ENCODE measurements at regions of chr5 and their contacts with region 1.

Region 1: DNA sequence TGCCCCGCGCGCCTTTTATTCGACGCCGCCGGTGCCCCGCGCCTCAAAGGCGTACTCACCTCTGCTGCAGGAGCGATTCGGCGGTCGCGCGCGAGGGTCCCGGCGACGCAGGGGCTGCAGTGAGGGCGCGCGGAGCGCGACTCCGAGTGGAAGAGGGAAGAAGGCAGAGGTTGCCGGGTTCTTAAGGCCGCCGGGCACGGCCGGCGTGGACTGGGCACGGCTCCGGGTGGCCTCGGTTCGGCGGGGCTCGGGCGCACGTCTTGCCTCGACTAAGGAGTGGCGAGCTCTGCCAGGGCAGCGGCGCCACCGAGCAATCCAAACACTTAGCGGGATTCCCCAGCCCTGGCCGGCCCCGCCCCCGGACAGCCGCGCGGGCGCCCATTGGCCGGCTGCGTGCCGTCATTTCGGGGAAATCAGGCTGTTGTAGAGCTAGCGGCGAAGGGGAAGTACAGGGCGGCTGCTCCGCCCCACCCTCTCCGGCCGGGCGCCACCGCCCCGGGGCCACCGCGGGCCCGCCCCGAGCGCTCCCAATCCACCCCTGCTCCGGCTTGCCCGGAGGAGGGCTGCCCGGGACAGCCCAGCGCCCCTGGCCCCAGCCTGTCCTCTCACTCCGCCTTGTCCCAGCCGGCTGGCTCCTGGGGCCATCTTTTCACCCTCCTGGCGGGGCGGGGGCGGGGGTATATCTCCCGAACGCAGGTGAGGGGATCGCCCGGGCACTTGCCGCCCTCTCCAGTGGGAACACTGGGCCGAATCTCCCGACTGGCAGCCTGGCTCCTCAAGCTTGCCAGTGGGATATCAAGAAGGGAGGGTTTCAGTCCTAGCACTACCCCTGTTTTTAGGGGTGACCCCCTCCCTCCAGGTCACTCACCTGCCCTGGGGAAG is at the start of gene IRF1:
- DNase-seq: peak; percentile 99
- H3K4me3 Mint-ChIP-seq: peak within 1 kb of the TSS; percentile 93
- H3K27ac Mint-ChIP-seq: peak within 1 kb of the TSS; percentile 99
- H3K4me1 Mint-ChIP-seq: peaks cover 66% of the 10 kb centered on the region
- H3K27me3 Mint-ChIP-seq: no peaks in the 10 kb centered on the region
- total RNA-seq, gene IRF1: 104 to 106 TPM

Region 2: GRCh38 chr5:131548176-131548575 is 942.6 kb before region 1 on chr5:
- CTCF ChIA-PET with region 1: no interaction called
- POLR2A ChIA-PET with region 1: no interaction called
- intact Hi-C with region 1: loop called (anchors 10 kb)
- DNase-seq: no peak
- H3K4me3 Mint-ChIP-seq: peak overlapping the region; percentile 86
- H3K27ac Mint-ChIP-seq: peak overlapping the region; percentile 92
- H3K4me1 Mint-ChIP-seq: peaks cover 70% of the 10 kb centered on the region
- H3K27me3 Mint-ChIP-seq: no peaks in the 10 kb centered on the region

Region 3: GRCh38 chr5:132410451-132411381 is 80.0 kb before region 1 on chr5:
- CTCF ChIA-PET with region 1: interaction called, 26 read pairs
- POLR2A ChIA-PET with region 1: interaction called, 101 read pairs
- intact Hi-C with region 1: no loop called
- DNase-seq: peak; percentile 90
- H3K4me3 Mint-ChIP-seq: peak overlapping the region; percentile 93
- H3K27ac Mint-ChIP-seq: peak overlapping the region; percentile 96
- H3K4me1 Mint-ChIP-seq: peaks cover 65% of the 10 kb centered on the region
- H3K27me3 Mint-ChIP-seq: no peaks in the 10 kb centered on the region

Region 4: DNA sequence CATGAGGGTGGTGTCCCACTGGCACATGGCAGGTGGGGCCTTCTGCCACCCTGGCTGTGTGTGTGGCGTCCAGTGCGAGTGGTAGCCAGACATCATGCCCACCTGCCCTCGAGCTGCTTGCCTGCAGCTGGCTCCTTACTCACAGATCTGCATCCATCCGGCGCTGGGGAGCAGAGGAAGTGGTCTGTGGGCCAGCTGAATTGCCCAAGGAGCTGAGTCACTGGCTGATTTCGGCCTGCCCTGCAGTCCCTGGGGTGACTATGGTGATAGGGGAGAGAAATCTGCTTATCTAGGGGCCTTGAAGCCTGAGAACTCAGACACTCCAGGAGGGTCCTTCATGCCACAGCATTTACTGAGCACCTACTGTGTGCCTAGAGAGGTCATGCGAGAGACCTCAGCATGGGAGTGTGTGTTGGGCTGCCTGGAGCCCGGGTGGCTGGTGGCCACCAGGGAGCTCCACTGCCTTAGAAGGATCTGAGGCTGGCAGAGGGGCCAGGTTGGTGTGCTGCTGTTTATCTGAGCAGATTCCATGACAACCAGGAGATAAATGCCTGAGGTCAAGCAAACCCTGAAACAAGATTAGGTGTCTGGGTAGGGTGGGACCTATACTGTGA is 64.1 kb before region 1 on chr5:
- CTCF ChIA-PET with region 1: interaction called, 40 read pairs
- POLR2A ChIA-PET with region 1: interaction called, 361 read pairs
- intact Hi-C with region 1: loop called (anchors 1 kb)
- DNase-seq: peak; percentile 91
- H3K4me3 Mint-ChIP-seq: peak overlapping the region; percentile 65
- H3K27ac Mint-ChIP-seq: peak overlapping the region; percentile 98
- H3K4me1 Mint-ChIP-seq: peaks cover 96% of the 10 kb centered on the region
- H3K27me3 Mint-ChIP-seq: no peaks in the 10 kb centered on the region

Region 5: DNA sequence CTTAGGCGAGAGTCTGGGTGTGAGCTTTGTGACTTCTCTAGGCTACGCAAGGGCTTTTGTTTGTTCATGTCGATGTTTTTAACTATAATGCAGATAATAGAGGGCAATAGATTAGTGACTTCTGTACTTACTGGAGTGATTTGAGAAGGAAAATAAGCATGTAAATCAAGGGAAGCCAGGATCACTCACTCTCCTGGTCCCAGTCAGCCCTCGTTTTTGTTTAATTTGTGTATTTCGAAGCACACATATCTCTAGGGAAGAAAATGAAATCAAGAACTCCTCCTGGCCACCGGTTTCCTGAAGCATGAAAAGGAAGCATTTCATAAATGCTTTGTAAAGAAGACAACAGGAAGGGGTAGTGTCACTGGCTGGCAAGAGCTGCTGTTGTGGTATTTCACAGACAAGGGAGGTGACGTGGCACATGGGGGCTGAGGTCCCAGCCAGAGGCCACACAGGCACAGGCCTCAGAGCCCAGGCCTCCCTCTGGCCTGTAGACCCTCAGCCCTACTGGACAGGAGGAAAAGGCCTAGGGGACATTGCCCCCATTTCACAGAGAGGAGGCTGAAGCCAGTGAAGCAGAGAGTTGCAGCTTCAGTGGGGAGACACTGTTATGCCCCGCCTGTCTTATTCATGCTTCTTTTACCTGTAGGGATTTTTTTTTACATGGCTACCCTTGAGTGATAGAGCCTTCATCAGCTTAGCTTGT is 34.3 kb before region 1 on chr5:
- CTCF ChIA-PET with region 1: interaction called, 5 read pairs
- POLR2A ChIA-PET with region 1: interaction called, 76 read pairs
- intact Hi-C with region 1: loop called (anchors 1 kb)
- DNase-seq: peak; percentile 76
- H3K4me3 Mint-ChIP-seq: peak overlapping the region; percentile 53
- H3K27ac Mint-ChIP-seq: peak overlapping the region; percentile 92
- H3K4me1 Mint-ChIP-seq: peaks cover 90% of the 10 kb centered on the region
- H3K27me3 Mint-ChIP-seq: no peaks in the 10 kb centered on the region

Region 6: DNA sequence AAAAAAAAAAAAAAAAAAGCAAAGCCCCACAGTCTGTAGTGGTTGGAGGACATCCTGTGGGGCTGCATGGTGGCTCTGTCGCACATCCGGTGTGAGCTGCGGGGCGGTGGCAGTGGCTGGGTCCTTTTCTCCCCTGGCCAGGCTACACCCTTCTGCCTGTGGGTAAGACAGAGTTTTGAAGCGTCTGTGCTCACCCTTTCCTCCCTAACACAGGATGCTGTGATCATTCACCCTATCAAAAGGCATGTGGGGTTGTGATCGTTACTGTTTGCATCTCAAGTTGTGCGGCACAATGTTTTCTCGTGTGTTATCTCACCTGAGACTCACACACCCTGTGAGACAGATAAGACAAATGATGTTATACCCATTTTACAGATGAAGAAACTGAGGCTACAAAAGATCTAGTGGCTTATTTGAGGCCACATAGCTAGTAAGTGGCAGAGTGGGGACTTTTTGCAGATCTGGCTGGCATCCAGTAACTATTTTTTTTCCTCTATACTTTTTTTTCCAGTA is 17.7 kb before region 1 on chr5:
- CTCF ChIA-PET with region 1: interaction called, 27 read pairs
- POLR2A ChIA-PET with region 1: interaction called, 252 read pairs
- intact Hi-C with region 1: no loop called
- DNase-seq: peak; percentile 90
- H3K4me3 Mint-ChIP-seq: peak overlapping the region; percentile 7
- H3K27ac Mint-ChIP-seq: peak overlapping the region; percentile 91
- H3K4me1 Mint-ChIP-seq: peaks cover 75% of the 10 kb centered on the region
- H3K27me3 Mint-ChIP-seq: no peaks in the 10 kb centered on the region

Region 7: GRCh38 chr5:132500931-132501630 is 10.4 kb after region 1 on chr5:
- CTCF ChIA-PET with region 1: interaction called, 19 read pairs
- POLR2A ChIA-PET with region 1: interaction called, 103 read pairs
- intact Hi-C with region 1: no loop called
- DNase-seq: peak; percentile 83
- H3K4me3 Mint-ChIP-seq: no peak overlapping the region
- H3K27ac Mint-ChIP-seq: peak overlapping the region; percentile 43
- H3K4me1 Mint-ChIP-seq: peaks cover 20% of the 10 kb centered on the region
- H3K27me3 Mint-ChIP-seq: peaks cover 3% of the 10 kb centered on the region

Region 8: DNA sequence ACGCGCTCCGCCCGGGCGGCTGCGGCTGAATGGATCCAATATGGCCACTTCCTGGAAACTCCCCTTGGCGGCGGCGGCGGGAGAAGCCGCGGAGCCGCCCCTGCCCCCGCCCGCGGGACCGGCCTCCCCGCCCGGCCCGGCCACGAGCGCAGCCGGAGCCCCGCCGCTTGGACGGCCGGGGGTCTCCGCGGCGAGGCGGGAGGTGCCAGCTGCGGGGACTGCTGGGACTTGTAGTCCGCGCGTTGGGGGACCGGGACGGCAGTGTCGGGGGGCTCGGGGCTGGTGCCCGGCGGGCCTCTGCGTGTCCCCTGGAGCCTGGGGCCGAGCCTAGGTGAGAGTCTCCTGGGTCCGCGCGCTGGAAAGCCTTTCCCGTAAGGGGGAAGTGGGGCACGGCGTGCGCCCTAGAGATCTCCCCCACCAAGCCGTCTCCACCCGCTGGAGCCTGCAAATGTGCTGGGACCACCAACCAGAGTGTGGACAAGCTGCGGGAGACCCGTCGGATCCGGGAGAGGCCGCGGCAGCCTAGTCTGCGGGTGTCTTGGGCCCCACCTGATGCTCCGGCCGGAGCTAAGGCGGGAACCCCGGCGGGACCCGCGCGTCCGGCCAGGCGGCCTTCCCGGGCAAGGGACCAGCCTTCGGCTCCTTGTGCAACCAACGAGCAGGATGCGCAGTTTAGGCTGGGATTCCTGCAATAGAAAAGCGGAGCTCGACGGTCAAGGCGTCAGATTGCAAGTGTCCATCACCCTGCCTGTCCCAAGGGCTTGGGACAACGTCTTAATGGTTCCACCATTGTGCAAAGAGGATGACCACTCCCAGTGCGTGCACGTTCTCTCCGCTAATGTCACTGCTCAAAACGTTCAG is 286.7 kb after region 1 on chr5 and contains the start of gene SEPTIN8:
- CTCF ChIA-PET with region 1: no interaction called
- POLR2A ChIA-PET with region 1: no interaction called
- intact Hi-C with region 1: no loop called
- DNase-seq: peak; percentile 62
- H3K4me3 Mint-ChIP-seq: peak within 1 kb of the TSS; percentile 68
- H3K27ac Mint-ChIP-seq: no peak within 1 kb of the TSS
- H3K4me1 Mint-ChIP-seq: peaks cover 2% of the 10 kb centered on the region
- H3K27me3 Mint-ChIP-seq: peaks cover 13% of the 10 kb centered on the region
- total RNA-seq, gene SEPTIN8: 31.1 to 32.8 TPM

Region 9: GRCh38 chr5:133051580-133052332 is 561.0 kb after region 1 on chr5 and contains the start of gene HSPA4:
- CTCF ChIA-PET with region 1: no interaction called
- POLR2A ChIA-PET with region 1: no interaction called
- intact Hi-C with region 1: no loop called
- DNase-seq: peak; percentile 99
- H3K4me3 Mint-ChIP-seq: peak within 1 kb of the TSS; percentile 89
- H3K27ac Mint-ChIP-seq: peak within 1 kb of the TSS; percentile 96
- H3K4me1 Mint-ChIP-seq: peaks cover 39% of the 10 kb centered on the region
- H3K27me3 Mint-ChIP-seq: no peaks in the 10 kb centered on the region
- total RNA-seq, gene HSPA4: 221 to 236 TPM